Heart left ventricle (tissue), 16 donors: ENCODE measurements at regions of chr18 and their contacts with region 1.

Region 1: GRCh38 chr18:27599202-27599829 is 414.2 kb upstream of the CHST9 start:
- DNase-seq: peak in 3 of 5 donors; percentile 14 to 39 (median 26)
- ATAC-seq: no peak
- H3K4me3 ChIP-seq: no peak overlapping the region
- H3K27ac ChIP-seq: no peak overlapping the region
- H3K4me1 ChIP-seq: no peaks in the 10 kb centered on the region
- H3K27me3 ChIP-seq: no peaks in the 10 kb centered on the region
- CTCF ChIP-seq: peak; percentile 51 to 87 (median 74)
- POLR2A ChIP-seq: no peak

Region 2: DNA sequence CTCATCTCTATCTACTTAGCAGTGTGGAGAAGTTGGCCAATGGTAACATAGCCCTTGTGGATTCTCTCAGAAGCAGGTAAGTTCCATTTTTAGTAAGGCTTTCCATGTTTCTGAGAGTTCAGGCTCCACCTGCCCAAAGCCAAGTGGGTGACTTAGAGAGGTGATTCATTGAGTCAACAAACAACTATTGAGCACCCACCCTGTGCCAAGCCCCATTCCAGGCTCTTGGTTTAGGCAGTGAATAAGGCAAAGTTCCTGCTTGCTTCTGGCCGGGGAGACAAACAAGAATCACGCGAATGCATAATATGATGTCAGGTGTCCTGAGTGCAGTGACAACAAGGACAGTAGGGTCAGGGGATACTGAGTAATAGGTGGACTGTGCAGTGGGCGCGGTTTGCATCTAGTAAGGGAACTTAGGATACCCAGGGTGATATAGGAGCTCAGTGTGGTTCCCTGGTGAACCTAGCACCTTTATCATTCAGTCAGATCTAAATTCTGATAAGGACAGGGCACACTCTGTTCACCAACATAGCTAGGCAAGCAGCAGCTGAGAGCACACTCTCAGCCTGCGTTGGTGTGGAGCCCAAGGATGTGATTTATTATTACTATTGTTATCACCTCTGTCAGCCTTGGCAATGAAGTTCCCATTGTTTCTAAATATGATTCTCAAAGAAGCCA is 1019.2 kb before region 1 on chr18:
- intact Hi-C with region 1: no loop called
- DNase-seq: no peak
- ATAC-seq: peak in 1 of 4 donors; percentile 5
- H3K4me3 ChIP-seq: no peak overlapping the region
- H3K27ac ChIP-seq: no peak overlapping the region
- H3K4me1 ChIP-seq: peaks cover 0 to 5% (median 0%) of the 10 kb centered on the region in 12 donors
- H3K27me3 ChIP-seq: peaks cover 0 to 25% (median 0%) of the 10 kb centered on the region in 9 donors
- CTCF ChIP-seq: no peak
- POLR2A ChIP-seq: no peak

Region 3: DNA sequence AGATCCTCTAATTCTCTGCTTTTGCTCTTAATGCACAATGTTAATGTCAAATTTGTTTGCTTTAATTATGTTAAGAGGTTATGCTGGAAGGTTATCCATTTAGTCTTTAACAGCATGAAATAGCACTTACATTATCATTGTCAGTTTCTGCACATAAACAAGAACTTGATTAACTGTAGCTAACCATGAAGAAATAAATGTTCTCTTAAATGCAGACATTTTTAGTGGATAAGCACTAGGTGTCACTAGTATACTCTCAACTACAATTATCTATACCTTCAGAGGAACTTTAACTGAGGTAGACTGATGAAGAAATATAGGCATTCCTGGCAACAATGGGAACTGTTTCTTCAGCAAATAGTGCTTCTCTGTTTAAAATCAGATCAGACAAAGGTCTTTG is 235.4 kb before region 1 on chr18:
- intact Hi-C with region 1: loop called (anchors 2 to 5 kb)
- DNase-seq: no peak
- ATAC-seq: no peak
- H3K4me3 ChIP-seq: no peak overlapping the region
- H3K27ac ChIP-seq: no peak overlapping the region
- H3K4me1 ChIP-seq: no peaks in the 10 kb centered on the region
- H3K27me3 ChIP-seq: no peaks in the 10 kb centered on the region
- CTCF ChIP-seq: peak in 7 of 12 donors; percentile 18 to 43 (median 36)
- POLR2A ChIP-seq: no peak

Region 4: GRCh38 chr18:27483276-27483675 is 116.0 kb before region 1 on chr18:
- intact Hi-C with region 1: no loop called
- DNase-seq: no peak
- ATAC-seq: no peak
- H3K4me3 ChIP-seq: no peak overlapping the region
- H3K27ac ChIP-seq: no peak overlapping the region
- H3K4me1 ChIP-seq: no peaks in the 10 kb centered on the region
- H3K27me3 ChIP-seq: no peaks in the 10 kb centered on the region
- CTCF ChIP-seq: no peak
- POLR2A ChIP-seq: no peak

Region 5: DNA sequence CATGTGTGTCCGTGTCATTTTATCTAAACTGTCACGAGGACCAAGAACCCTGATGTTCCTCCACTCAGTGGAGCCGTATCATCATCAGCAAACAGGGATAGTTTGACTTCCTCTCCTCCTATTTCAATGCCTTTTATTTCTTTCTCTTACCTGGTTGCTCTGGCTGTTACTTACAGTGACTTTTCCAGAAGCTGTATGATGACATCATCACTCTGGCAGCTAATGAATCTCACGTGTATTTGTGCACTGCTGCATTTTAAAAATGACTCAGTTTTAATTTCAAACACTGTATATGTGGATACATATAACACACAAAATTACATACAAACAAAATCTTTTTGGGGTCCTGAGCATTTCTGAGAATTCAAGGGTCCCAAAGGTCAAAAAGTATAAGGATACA is 96.2 kb after region 1 on chr18:
- intact Hi-C with region 1: no loop called
- DNase-seq: no peak
- ATAC-seq: no peak
- H3K4me3 ChIP-seq: no peak overlapping the region
- H3K27ac ChIP-seq: no peak overlapping the region
- H3K4me1 ChIP-seq: no peaks in the 10 kb centered on the region
- H3K27me3 ChIP-seq: no peaks in the 10 kb centered on the region
- CTCF ChIP-seq: no peak
- POLR2A ChIP-seq: no peak